B cell (primary cell): ENCODE measurements at regions of chr5 and their contacts with region 1.

Region 1: GRCh38 chr5:43008369-43009153 is 31.6 kb downstream of the ANXA2R start:
- DNase-seq: peak; percentile 95
- ATAC-seq: peak; percentile 58
- H3K4me3 ChIP-seq: peak overlapping the region; percentile 69 to 99 (median 76)
- H3K4me3 Mint-ChIP-seq: peak overlapping the region; percentile 89
- H3K27ac ChIP-seq: peak overlapping the region; percentile 83 to 97
- H3K27ac Mint-ChIP-seq: peak overlapping the region; percentile 98
- H3K4me1 ChIP-seq: peaks cover 20 to 38% of the 10 kb centered on the region in 2 donors
- H3K4me1 Mint-ChIP-seq: peaks cover 31% of the 10 kb centered on the region
- H3K27me3 ChIP-seq: no peaks in the 10 kb centered on the region
- H3K27me3 Mint-ChIP-seq: no peaks in the 10 kb centered on the region
- CTCF ChIP-seq: peak; percentile 36

Region 2: DNA sequence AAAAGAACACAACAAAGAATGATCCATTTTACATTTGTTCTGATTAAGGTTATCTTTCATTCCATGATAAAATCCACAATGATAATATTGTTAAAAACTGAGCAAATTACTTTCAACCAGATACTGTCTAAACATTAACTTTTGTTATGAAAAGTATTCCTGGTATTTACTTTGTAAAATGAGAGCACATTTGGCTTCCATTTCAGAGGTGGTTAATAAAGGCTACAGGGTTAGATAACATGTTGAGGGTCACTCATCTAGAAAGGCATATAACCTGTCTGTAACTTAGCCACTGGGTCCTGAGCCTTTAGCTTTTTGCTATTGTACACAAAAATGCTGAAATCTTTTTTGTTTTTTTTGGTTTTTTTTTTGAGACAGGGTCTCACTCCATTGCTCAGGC is 67.7 kb before region 1 on chr5:
- CTCF ChIA-PET with region 1: no interaction called
- POLR2A ChIA-PET with region 1: no interaction called
- intact Hi-C with region 1: no loop called
- DNase-seq: no peak
- ATAC-seq: no peak
- H3K4me3 ChIP-seq: no peak overlapping the region
- H3K4me3 Mint-ChIP-seq: no peak overlapping the region
- H3K27ac ChIP-seq: no peak overlapping the region
- H3K27ac Mint-ChIP-seq: no peak overlapping the region
- H3K4me1 ChIP-seq: peaks cover 0 to 6% of the 10 kb centered on the region in 2 donors
- H3K4me1 Mint-ChIP-seq: no peaks in the 10 kb centered on the region
- H3K27me3 ChIP-seq: peaks cover 0 to 18% (median 7%) of the 10 kb centered on the region in 4 experiments
- H3K27me3 Mint-ChIP-seq: peaks cover 21% of the 10 kb centered on the region
- CTCF ChIP-seq: no peak

Region 3: GRCh38 chr5:43040287-43041098 is 31.9 kb after region 1 on chr5 and contains the start of gene ANXA2R:
- CTCF ChIA-PET with region 1: interaction called, 55 read pairs
- POLR2A ChIA-PET with region 1: interaction called, 113 read pairs
- intact Hi-C with region 1: loop called (anchors 1 kb)
- DNase-seq: peak; percentile 97
- ATAC-seq: peak; percentile 60
- H3K4me3 ChIP-seq: peak within 1 kb of the TSS; percentile 62 to 95 (median 81)
- H3K4me3 Mint-ChIP-seq: peak within 1 kb of the TSS; percentile 97
- H3K27ac ChIP-seq: peak within 1 kb of the TSS; percentile 98 to 99
- H3K27ac Mint-ChIP-seq: peak within 1 kb of the TSS; percentile 98
- H3K4me1 ChIP-seq: peaks cover 25 to 44% of the 10 kb centered on the region in 2 donors
- H3K4me1 Mint-ChIP-seq: peaks cover 39% of the 10 kb centered on the region
- H3K27me3 ChIP-seq: no peaks in the 10 kb centered on the region
- H3K27me3 Mint-ChIP-seq: no peaks in the 10 kb centered on the region
- CTCF ChIP-seq: peak; percentile 86
- total RNA-seq, gene ANXA2R: 19.3 and 20.0 TPM in 2 replicates